GM10248 (cell line): ENCODE measurements at regions of chr1 and their contacts with region 1.

Region 1: DNA sequence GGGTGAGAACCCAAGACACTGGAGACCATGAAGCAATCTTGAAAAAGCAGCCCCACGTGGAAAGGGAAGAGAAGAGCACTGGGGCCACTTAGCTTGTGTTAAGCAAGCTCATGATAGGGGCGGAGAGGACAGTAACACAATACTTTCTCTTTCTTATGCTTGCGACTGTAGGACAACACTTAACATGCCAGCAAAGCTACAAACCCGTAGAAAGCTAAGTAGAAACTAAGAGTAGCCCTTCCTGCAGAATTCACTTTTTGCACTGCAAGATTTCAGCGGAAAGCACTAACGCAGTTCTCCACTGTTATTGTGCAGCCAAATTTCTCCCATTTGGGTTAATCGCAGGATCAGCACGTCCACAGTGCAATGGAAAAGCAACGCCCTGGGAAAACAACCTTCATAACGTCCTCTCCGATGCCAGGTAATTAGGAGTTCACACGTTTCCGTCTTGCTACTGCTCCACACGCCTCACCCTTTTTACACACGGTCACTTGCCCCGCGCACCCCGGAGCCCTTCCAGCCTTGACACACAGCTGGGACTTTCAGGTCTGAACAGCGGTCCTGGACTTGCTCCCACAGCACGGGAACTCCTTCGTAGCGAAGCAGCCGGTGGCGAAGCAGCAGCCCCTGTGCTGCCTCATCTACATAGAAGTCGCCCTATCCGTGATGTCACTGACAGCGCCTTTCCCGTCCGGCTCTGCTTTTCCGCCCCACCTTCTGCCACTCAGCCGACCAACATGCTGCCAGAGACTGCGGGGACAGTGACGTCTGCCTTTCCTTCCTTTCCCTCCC is 148.6 kb downstream of the PPIAL4G start:
- DNase-seq: peak; percentile 52
- CTCF ChIP-seq: no peak

Region 2: DNA sequence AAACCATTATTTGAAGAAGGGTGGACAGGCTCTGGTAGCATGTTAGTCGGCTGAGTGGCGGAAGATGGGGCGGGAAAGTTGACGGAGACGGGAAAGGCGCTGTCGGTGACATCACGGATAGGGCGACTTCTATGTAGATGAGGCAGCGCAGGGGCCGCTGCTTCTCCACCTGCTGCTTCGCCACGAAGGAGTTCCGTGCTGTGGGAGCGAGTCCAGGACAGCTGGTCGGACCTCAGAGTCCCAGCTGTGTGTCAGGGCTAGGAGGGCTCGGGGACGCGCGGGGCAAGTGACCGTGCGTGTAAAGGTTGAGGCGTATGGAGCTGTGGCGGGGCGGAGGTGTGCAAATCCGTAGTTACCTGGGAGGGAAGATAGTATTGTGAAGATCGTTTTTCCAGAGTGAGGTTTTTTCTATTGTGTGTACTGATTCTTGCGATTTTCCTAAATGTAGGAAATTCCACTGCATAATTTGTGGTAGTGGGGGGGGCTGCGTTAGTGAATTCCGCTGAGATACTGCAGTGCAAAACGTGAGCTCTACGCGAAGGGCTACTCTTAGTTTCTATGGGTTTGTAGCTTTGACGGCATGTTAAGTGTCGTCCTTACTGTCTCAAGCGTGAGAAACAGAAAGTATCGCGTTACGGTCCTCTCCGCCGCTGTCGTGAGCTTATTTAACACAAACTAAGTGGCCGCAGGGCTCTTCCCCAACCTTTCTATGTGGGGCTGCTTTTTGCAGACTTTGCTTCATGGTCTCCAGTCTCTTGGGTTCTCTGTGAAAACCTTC is 71.2 kb before region 1 on chr1:
- CTCF ChIA-PET with region 1: no interaction called
- POLR2A ChIA-PET with region 1: interaction called, 30 read pairs
- DNase-seq: peak; percentile 76
- CTCF ChIP-seq: no peak

Region 3: GRCh38 chr1:148388260-148389027 is 53.9 kb after region 1 on chr1:
- CTCF ChIA-PET with region 1: no interaction called
- POLR2A ChIA-PET with region 1: interaction called, 12 read pairs
- DNase-seq: peak; percentile 84
- CTCF ChIP-seq: no peak